ENCODE measurements at regions of chr9 and their contacts with region 1.

Region 1: DNA sequence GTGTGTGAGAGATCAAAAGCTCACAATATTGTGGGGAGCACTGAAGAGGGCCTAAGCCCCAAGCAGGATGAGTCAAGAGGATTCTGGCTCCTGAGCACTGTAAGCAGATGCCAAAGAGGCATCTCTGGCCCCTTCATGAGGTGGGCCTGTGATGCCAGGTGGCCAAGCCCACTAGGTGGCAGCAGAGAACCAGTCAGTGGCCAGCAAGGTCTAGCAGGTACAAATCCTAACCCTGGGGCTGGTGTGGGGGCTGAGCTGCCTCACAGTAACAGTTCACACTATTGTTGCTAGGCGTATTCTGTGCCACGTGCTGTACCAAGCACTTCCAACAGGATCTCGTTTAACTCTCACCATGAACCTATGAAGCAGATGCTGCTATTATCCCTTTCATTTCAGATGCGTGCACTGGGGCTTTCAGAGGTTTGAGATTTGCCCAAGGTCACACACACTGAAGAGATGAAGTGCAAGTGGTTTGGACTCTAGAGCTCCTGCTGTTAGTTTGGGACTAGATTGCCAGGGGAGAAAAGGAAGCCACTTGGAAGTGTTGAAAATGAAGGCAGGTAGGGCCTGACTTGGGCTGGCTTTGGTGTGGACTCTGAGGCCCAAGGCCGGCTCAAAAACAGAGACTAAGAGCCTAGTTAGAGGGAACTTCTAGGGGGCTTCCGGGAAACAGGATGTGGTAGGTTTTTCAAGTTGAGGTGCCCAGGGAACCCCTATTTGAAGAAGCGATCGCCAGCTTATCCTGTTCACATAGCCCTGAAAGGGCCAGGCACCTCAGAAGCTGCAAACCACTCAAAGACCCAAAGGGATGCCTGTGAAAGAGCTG is 4.4 kb upstream of the MLANA start:
- DNase-seq: peak; percentile 23
- H3K4me3 ChIP-seq: no peak overlapping the region
- H3K27ac ChIP-seq: no peak overlapping the region
- H3K27me3 ChIP-seq: peaks cover 9% of the 10 kb centered on the region
- CTCF ChIP-seq: peak; percentile 97

Region 2: DNA sequence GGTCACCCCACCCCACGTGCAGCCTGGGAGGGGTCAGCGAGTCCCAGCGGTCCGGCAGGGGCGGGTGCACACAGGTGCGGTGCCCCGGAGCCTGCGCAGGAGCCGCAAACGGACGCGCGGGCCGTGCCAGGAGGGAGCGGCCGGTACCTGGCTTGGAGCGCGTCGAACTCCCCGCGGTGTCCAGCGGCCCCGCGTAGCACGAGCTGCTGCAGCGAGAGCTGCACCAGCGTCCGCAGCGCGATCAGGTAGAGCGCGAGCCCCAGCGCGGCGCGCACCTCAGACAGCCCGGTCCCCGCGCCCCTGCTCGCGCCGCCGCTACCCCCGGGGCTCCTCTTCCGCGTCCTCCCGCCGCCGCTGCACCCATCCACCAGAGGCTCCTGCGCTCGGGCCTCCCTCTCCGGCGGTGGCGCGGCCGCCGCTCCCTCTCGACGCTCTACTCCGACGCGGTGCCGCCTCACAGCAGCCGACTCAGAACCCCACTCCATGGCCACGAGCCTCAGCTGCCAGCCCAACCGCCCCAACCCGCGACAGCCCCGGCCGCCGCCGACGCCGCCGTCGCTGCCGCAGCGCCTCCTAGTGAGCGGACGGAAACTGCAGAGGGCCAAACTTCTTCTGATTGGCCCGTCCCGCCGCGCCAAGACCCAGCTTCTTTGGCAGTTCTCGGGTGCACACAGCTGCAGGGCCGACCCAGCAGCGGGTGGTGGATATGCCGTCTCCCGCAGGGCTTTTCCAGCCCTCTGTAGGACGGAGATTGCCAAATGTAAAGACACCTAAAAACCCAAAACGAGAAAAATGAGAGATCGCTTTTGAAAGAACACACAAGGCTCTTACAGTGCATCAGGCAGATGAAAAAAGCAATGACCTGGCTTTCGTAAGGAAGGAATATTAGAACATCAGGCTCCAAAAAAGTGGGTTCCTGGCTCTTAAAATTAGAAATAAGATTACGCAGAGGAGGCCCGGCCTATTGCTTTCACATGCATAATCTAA is 53.5 kb before region 1 on chr9 and contains the start of gene ERMP1:
- CTCF ChIA-PET with region 1: interaction called, 30 read pairs
- POLR2A ChIA-PET with region 1: no interaction called
- DNase-seq: peak; percentile 43
- H3K4me3 ChIP-seq: peak within 1 kb of the TSS; percentile 69
- H3K27ac ChIP-seq: no peak within 1 kb of the TSS
- H3K27me3 ChIP-seq: peaks cover 13% of the 10 kb centered on the region
- CTCF ChIP-seq: peak; percentile 77
- polyA plus RNA-seq, gene ERMP1: 5.5 and 6.1 TPM in 2 replicates

Region 3: GRCh38 chr9:5857928-5858327 is 28.4 kb before region 1 on chr9:
- CTCF ChIA-PET with region 1: interaction called, 14 read pairs
- POLR2A ChIA-PET with region 1: no interaction called
- DNase-seq: no peak
- H3K4me3 ChIP-seq: no peak overlapping the region
- H3K27ac ChIP-seq: no peak overlapping the region
- H3K27me3 ChIP-seq: peaks cover 36% of the 10 kb centered on the region
- CTCF ChIP-seq: no peak

Region 4: DNA sequence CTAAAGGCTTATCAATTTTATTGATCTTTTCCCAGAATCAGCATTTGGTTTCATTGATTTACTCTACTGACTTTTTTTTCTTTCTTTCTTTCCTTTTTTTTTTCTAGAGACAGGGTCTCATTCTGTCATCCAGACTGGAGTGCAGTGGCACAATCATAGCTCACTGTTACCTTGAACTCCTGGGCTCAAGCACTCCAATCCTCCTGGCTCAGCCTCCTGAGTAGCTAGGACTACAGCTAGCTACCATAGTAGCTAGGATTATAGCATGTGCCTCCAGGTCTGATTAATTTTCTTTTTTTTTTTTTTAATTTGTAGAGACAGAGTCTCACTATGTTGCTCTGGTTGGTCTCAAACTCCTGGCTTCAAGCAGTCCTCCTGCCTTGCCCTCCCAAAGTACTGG is 16.1 kb after region 1 on chr9:
- CTCF ChIA-PET with region 1: interaction called, 25 read pairs
- POLR2A ChIA-PET with region 1: no interaction called
- DNase-seq: no peak
- H3K4me3 ChIP-seq: no peak overlapping the region
- H3K27ac ChIP-seq: no peak overlapping the region
- H3K27me3 ChIP-seq: no peaks in the 10 kb centered on the region
- CTCF ChIP-seq: no peak

Region 5: DNA sequence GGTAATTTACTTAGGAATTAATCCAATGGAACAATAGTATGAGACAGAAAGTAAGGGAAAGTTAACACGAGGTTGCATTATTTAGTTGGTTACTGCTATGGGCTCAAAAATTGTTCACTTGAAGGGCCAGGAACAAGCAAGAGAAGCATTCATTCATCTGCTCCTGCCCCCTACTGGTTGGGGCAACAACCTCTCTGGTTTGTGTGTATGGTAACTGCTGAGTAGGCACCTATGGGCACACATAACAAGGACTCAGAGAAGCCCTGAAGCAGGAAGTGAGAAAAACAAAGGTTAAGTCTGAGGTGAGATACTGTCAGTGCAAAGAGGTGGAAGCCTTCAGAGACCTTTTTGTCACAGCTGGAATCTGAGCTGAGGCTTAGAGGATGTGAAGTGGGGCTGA is 163.5 kb after region 1 on chr9:
- CTCF ChIA-PET with region 1: interaction called, 108 read pairs
- POLR2A ChIA-PET with region 1: no interaction called
- DNase-seq: no peak
- H3K4me3 ChIP-seq: no peak overlapping the region
- H3K27ac ChIP-seq: no peak overlapping the region
- H3K27me3 ChIP-seq: peaks cover 5% of the 10 kb centered on the region
- CTCF ChIP-seq: peak; percentile 30

Region 6: GRCh38 chr9:6305954-6306563 is 419.7 kb after region 1 on chr9:
- CTCF ChIA-PET with region 1: interaction called, 38 read pairs
- POLR2A ChIA-PET with region 1: no interaction called
- DNase-seq: peak; percentile 13
- H3K4me3 ChIP-seq: no peak overlapping the region
- H3K27ac ChIP-seq: no peak overlapping the region
- H3K27me3 ChIP-seq: no peaks in the 10 kb centered on the region
- CTCF ChIP-seq: peak; percentile 61